PC-3 (cell line): ENCODE measurements at regions of chr14 and their contacts with region 1.

Region 1: DNA sequence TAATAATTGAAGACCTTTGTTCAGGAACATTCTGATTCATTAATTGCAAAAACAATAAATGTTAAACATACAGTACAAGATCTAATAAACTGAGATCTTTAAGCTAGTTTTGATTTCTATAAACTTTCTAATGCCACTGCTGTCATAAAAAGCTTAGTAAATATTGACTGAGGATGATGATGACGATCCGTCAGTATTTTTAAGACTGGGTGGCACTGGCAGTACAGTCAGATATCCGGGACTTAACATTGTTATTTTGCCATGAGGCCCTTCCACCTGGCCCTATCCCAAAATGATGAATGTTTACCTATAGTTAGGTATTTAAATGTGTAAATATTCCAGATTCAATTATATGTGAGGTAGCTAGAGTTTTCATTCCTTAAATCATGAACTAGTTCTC is 158.6 kb downstream of the FOXA1 start:
- DNase-seq: peak; percentile 97
- ATAC-seq: peak; percentile 92
- H3K4me3 ChIP-seq: no peak overlapping the region; the same call in 1 of the 2 replicates
- H3K27ac ChIP-seq: peak overlapping the region; percentile 94
- H3K4me1 ChIP-seq: peaks cover 24% of the 10 kb centered on the region
- H3K27me3 ChIP-seq: no peaks in the 10 kb centered on the region
- CTCF ChIP-seq: no peak

Region 2: GRCh38 chr14:37253905-37254304 is 182.6 kb before region 1 on chr14:
- CTCF ChIA-PET with region 1: interaction called, 3 read pairs
- POLR2A ChIA-PET with region 1: no interaction called
- intact Hi-C with region 1: loop called (anchors 1 kb)
- DNase-seq: peak; percentile 94
- ATAC-seq: peak; percentile 64
- H3K4me3 ChIP-seq: no peak overlapping the region
- H3K27ac ChIP-seq: no peak overlapping the region
- H3K4me1 ChIP-seq: peaks cover 41% of the 10 kb centered on the region
- H3K27me3 ChIP-seq: no peaks in the 10 kb centered on the region
- CTCF ChIP-seq: no peak

Region 3: DNA sequence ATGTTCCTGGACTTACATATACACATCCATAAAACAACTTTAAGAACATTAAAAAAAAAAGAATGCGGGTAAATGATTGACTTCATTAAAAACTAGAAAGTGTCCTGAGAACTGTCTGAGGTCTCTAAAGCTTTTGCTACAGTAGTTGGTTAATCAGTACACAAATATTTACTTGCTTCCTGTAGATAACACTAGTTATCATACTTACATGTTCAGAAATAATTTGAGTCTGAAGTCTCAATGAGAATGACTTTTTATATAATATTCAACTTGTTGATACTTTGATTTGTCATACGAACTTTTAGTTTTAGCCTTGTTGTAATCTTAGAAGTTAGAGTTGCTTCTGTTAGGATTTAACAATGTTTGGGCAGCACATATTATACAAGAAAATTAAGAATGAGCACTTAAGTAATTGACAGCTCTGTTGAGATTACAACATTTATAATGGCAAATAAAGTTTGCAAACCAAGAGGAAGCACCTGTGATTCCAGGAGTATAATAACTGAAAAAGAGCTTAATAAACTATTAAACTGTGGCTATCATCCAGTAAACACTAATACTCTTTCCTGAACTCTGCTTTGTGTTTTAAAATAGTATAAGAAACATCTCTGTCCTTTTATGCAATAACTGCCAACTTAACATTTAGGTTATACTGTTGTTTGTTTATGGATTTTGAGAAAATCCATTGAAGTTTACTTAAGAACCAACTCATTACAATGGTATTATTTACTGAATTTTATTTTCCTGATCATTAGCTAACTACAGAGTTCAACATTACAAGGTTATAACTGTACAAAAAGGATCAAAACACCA is 107.1 kb before region 1 on chr14:
- CTCF ChIA-PET with region 1: no interaction called
- POLR2A ChIA-PET with region 1: no interaction called
- intact Hi-C with region 1: loop called (anchors 1 kb)
- DNase-seq: peak; percentile 64
- ATAC-seq: peak; percentile 80
- H3K4me3 ChIP-seq: no peak overlapping the region
- H3K27ac ChIP-seq: peak overlapping the region; percentile 58
- H3K4me1 ChIP-seq: peaks cover 18% of the 10 kb centered on the region
- H3K27me3 ChIP-seq: no peaks in the 10 kb centered on the region
- CTCF ChIP-seq: no peak

Region 4: GRCh38 chr14:37546621-37547447 is 110.3 kb after region 1 on chr14:
- CTCF ChIA-PET with region 1: no interaction called
- POLR2A ChIA-PET with region 1: no interaction called
- intact Hi-C with region 1: loop called (anchors 1 kb)
- DNase-seq: peak; percentile 89
- ATAC-seq: peak; percentile 87
- H3K4me3 ChIP-seq: peak overlapping the region; percentile 65
- H3K27ac ChIP-seq: peak overlapping the region; percentile 97
- H3K4me1 ChIP-seq: peaks cover 62% of the 10 kb centered on the region
- H3K27me3 ChIP-seq: no peaks in the 10 kb centered on the region
- CTCF ChIP-seq: no peak

Region 5: GRCh38 chr14:37824939-37825712 is 388.6 kb after region 1 on chr14:
- CTCF ChIA-PET with region 1: no interaction called
- POLR2A ChIA-PET with region 1: no interaction called
- intact Hi-C with region 1: loop called (anchors 2 kb)
- DNase-seq: peak; percentile 55
- ATAC-seq: peak; percentile 66
- H3K4me3 ChIP-seq: no peak overlapping the region
- H3K27ac ChIP-seq: peak overlapping the region; percentile 10
- H3K4me1 ChIP-seq: peaks cover 33% of the 10 kb centered on the region
- H3K27me3 ChIP-seq: no peaks in the 10 kb centered on the region
- CTCF ChIP-seq: no peak